IMR-90 (cell line): ENCODE measurements at regions of chr13 and their contacts with region 1.

Region 1: GRCh38 chr13:64347664-64348063 is 2882.5 kb downstream of the PCDH9 start:
- DNase-seq: peak; percentile 19
- ATAC-seq: no peak
- H3K4me3 ChIP-seq: no peak overlapping the region
- H3K27ac ChIP-seq: no peak overlapping the region
- H3K4me1 ChIP-seq: no peaks in the 10 kb centered on the region
- H3K27me3 ChIP-seq: no peaks in the 10 kb centered on the region
- CTCF ChIP-seq: no peak
- POLR2A ChIP-seq: no peak
- RAD21 ChIP-seq: no peak

Region 2: DNA sequence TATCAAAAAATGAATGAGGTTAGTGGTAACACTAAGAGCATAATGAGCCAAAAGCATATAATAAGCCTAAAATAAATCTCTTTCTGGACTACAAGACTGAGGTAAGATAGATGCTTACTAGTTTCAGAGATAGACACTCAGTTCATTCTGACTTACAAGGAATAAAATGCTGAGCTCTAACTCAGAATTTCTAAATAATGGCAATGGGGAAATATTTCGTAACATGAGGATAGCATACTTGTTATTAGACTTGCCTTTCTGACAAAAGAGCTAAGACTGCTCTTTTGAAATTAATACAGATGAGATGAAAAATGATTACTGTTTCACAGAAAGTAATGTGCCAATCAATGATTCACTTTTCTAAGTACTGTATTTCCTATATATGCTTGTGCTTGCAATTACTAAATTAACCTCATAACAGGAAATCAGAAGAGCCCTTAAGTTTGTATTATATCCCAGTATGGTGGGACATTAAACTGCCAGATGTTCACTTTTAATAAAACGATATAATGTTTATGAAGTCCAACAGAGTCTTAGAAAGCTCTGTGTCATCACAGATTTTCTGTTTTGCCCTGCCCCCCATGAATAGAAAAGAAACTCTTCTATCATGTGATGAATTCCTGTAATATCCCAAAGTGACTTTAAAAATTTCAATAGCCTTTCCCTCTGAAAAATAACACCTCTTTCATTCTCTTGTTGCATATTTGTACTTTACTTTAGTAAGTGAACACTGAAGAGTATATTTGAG is 161.0 kb before region 1 on chr13:
- CTCF ChIA-PET with region 1: no interaction called
- POLR2A ChIA-PET with region 1: no interaction called
- dilution Hi-C with region 1: no loop called
- in situ Hi-C with region 1: no loop called
- intact Hi-C with region 1: loop called (anchors 10 kb)
- DNase-seq: peak; percentile 2
- ATAC-seq: no peak
- H3K4me3 ChIP-seq: no peak overlapping the region
- H3K27ac ChIP-seq: no peak overlapping the region
- H3K4me1 ChIP-seq: no peaks in the 10 kb centered on the region
- H3K27me3 ChIP-seq: no peaks in the 10 kb centered on the region
- CTCF ChIP-seq: no peak
- POLR2A ChIP-seq: no peak
- RAD21 ChIP-seq: no peak